ENCODE measurements at regions of chr20 and their contacts with region 1.

Region 1: GRCh38 chr20:20608041-20608440 is 104.4 kb downstream of the RALGAPA2 start:
- DNase-seq: no peak
- H3K4me3 ChIP-seq: no peak overlapping the region
- H3K27ac ChIP-seq: no peak overlapping the region
- H3K4me1 ChIP-seq: no peaks in the 10 kb centered on the region
- H3K27me3 ChIP-seq: no peaks in the 10 kb centered on the region
- CTCF ChIP-seq: no peak

Region 2: GRCh38 chr20:20407891-20408805 is 199.9 kb before region 1 on chr20:
- CTCF ChIA-PET with region 1: no interaction called
- POLR2A ChIA-PET with region 1: no interaction called
- intact Hi-C with region 1: no loop called
- DNase-seq: no peak
- H3K4me3 ChIP-seq: no peak overlapping the region
- H3K27ac ChIP-seq: no peak overlapping the region
- H3K4me1 ChIP-seq: no peaks in the 10 kb centered on the region
- H3K27me3 ChIP-seq: no peaks in the 10 kb centered on the region
- CTCF ChIP-seq: peak; percentile 55

Region 3: DNA sequence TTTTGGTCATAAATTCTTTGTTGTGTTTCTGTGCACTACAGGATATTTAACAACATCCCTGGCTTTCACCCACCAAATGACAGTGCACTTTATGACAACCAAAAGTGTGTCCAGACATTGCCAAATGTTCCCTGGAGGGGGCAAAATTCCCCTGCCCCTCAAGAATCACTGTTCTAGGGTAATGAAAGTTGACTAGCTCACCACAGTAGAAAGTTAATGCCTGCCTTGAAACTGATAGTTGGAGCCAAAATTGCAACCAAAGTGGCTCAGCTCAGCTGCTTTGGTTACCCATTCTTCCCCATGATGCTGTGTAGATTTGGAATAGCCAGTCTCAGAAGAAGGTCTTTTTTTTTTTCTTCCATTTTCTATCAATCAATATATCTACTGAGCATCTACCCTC is 46.2 kb before region 1 on chr20:
- CTCF ChIA-PET with region 1: no interaction called
- POLR2A ChIA-PET with region 1: interaction called, 15 read pairs
- intact Hi-C with region 1: no loop called
- DNase-seq: no peak
- H3K4me3 ChIP-seq: no peak overlapping the region
- H3K27ac ChIP-seq: no peak overlapping the region
- H3K4me1 ChIP-seq: no peaks in the 10 kb centered on the region
- H3K27me3 ChIP-seq: no peaks in the 10 kb centered on the region
- CTCF ChIP-seq: no peak

Measured in PC-9 (cell line).